ENCODE measurements at regions of chr3 and their contacts with region 1.

Region 1: DNA sequence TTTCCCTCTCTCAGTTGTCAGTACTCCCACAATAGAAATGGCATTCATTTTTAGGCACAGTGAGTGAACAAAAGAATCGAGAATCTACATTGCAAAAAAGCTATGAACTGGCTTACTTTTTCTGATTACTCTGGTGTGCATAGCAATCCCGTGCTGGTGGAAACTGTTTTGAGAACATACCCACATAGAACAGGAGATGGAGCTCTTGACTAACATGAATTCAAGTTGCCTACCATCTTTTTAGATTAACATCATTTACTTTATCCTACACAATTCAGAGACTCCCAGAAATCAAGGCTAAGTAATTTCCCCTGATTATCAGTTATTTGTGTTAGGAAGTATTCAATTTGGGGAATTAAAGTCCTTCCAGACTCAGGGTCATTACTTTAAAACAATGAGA is 326.6 kb downstream of the ARPP21 start:
- DNase-seq: no peak
- ATAC-seq: peak in 1 of 2 donors; percentile 78

Region 2: DNA sequence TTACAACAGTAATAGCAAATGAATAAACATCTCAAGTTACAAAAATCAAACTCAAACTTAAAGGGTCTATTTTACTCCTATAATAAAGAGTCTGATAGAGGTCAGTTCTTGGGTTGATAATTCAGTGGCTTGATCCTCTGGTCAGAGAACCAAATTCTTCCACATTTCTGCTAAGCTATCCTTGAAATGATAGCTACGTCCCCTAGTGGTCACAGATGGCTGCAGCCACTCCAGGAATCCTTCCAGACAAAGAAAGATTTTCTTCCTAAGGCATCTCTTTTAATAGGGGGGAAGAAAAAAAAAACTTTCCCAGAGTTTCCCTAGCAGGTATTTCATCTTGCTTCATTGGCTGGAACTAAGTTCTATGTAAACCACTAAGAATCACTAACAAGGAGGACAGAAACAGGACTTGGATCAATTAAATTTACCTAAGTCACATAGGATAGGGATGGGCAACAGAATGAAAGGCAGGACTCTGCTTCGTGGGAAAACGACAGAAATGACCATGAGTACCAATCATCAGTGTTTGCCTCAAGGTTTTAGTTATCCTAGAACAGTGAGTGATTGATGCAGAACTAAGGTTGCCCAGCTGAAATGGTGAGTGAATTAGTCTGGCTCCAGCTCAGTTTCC is 575.1 kb after region 1 on chr3:
- intact Hi-C with region 1: loop called in 1 of 2 experiments (anchors 5 kb)
- DNase-seq: no peak
- ATAC-seq: no peak

Region 3: GRCh38 chr3:36693670-36694069 is 727.8 kb after region 1 on chr3:
- intact Hi-C with region 1: loop called in 1 of 2 experiments (anchors 5 kb)
- DNase-seq: no peak
- ATAC-seq: no peak

Region 4: DNA sequence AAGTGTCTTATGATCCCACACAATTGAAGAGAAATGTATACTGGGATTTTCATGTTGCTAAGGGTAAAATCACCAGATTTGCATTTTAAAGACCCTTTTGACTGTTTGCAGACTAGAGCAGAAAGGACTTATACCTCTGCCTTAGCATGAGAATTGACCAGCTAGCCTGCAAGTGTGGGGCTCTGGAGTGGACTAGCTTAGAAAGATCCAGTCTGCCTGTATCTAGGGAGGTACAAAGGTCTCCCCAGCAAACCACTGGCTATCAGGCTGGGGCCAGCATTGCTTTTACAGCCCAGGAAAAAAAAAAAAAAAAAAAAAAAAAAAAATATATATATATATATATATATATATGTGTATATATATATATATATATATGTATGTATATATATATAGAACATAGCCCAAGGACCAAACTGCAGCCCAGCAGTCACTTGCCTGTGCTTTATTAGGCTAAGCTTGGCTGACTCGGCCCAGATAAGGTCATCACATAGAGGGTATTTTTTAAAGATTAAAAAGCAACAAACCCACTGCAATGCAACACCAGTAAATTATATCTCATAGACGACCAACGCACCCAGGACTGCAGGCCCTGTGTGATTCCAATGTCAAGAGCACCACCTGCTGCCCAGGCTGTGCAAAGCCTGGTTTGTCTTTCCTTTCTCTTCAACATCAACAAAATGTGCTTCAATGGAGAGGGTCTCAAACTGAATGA is 734.8 kb after region 1 on chr3:
- intact Hi-C with region 1: loop called in 1 of 2 experiments (anchors 2 kb)
- DNase-seq: peak; percentile 43
- ATAC-seq: peak; percentile 85 to 86

Measured in left cardiac atrium (tissue), 4 donors.